Activated naive CD4-positive, alpha-beta T cell treated with anti-CD3 and anti-CD28 coated beads for 36 hours (primary cell): ENCODE measurements at regions of chr1 and their contacts with region 1.

Region 1: GRCh38 chr1:59046730-59047157 is 250.2 kb upstream of the FGGY start:
- DNase-seq: peak; percentile 79
- H3K4me3 Mint-ChIP-seq: peak overlapping the region; percentile 37
- H3K27ac Mint-ChIP-seq: peak overlapping the region; percentile 86
- H3K4me1 Mint-ChIP-seq: peaks cover 30% of the 10 kb centered on the region
- H3K27me3 Mint-ChIP-seq: no peaks in the 10 kb centered on the region

Region 2: DNA sequence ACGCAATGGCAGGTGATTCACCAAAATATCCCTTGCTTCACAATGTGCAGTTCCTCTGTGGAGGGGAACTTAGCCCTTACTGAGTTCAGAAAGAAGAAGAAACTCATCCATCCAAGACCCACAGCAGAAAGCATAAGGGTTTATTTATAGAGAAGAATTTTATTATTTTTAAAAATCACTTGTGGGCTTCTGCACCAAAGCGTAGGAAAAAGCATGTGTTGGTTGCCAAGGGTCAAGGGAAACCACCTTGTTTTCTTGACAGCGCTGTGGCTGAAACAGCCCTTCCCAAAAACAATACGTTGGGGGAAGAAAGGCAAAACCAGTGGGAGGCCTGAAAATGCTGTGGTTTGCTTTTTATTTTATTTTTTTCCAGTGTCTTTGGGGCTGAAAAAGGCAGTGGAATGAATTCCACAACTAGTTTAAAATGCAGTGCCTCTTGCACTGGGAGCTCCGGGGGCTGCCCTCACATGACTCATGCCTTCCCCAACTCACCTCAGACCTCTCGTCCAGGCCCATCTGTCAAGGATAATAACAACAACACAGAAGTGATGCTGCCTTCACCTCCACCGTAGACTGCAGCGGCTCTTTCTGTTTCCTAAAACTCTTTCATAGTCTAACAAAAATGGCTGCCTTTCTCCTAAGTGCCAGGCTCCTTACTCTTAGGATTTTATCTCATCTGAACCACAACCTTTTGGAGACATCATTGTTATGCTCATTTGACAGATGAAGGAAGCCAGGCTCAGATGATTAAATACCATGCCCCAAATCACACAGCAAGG is 38.7 kb before region 1 on chr1:
- CTCF ChIA-PET with region 1: no interaction called
- intact Hi-C with region 1: loop called (anchors 5 kb)
- DNase-seq: peak; percentile 64
- H3K4me3 Mint-ChIP-seq: no peak overlapping the region
- H3K27ac Mint-ChIP-seq: peak overlapping the region; percentile 39
- H3K4me1 Mint-ChIP-seq: peaks cover 40% of the 10 kb centered on the region
- H3K27me3 Mint-ChIP-seq: no peaks in the 10 kb centered on the region

Region 3: GRCh38 chr1:59062743-59063142 is 16.0 kb after region 1 on chr1:
- CTCF ChIA-PET with region 1: interaction called, 6 read pairs
- intact Hi-C with region 1: loop called (anchors 1 kb)
- DNase-seq: no peak
- H3K4me3 Mint-ChIP-seq: no peak overlapping the region
- H3K27ac Mint-ChIP-seq: peak overlapping the region; percentile 35
- H3K4me1 Mint-ChIP-seq: peaks cover 34% of the 10 kb centered on the region
- H3K27me3 Mint-ChIP-seq: no peaks in the 10 kb centered on the region

Region 4: GRCh38 chr1:59150577-59151391 is 104.0 kb after region 1 on chr1:
- CTCF ChIA-PET with region 1: no interaction called
- intact Hi-C with region 1: loop called (anchors 5 kb)
- DNase-seq: peak; percentile 42
- H3K4me3 Mint-ChIP-seq: no peak overlapping the region
- H3K27ac Mint-ChIP-seq: no peak overlapping the region
- H3K4me1 Mint-ChIP-seq: peaks cover 13% of the 10 kb centered on the region
- H3K27me3 Mint-ChIP-seq: no peaks in the 10 kb centered on the region

Region 5: GRCh38 chr1:59767119-59767518 is 720.4 kb after region 1 on chr1:
- CTCF ChIA-PET with region 1: no interaction called
- intact Hi-C with region 1: no loop called
- DNase-seq: no peak
- H3K4me3 Mint-ChIP-seq: no peak overlapping the region
- H3K27ac Mint-ChIP-seq: no peak overlapping the region
- H3K4me1 Mint-ChIP-seq: no peaks in the 10 kb centered on the region
- H3K27me3 Mint-ChIP-seq: no peaks in the 10 kb centered on the region